MCF 10A (cell line): ENCODE measurements at regions of chr4 and their contacts with region 1.

Region 1: GRCh38 chr4:161564230-161564834 is 599.5 kb downstream of the FSTL5 start:
- DNase-seq: peak; percentile 17
- H3K4me3 Mint-ChIP-seq: no peak overlapping the region
- H3K27ac Mint-ChIP-seq: no peak overlapping the region
- H3K4me1 Mint-ChIP-seq: peaks cover 6% of the 10 kb centered on the region
- H3K27me3 Mint-ChIP-seq: no peaks in the 10 kb centered on the region
- CTCF ChIP-seq: peak; percentile 38

Region 2: DNA sequence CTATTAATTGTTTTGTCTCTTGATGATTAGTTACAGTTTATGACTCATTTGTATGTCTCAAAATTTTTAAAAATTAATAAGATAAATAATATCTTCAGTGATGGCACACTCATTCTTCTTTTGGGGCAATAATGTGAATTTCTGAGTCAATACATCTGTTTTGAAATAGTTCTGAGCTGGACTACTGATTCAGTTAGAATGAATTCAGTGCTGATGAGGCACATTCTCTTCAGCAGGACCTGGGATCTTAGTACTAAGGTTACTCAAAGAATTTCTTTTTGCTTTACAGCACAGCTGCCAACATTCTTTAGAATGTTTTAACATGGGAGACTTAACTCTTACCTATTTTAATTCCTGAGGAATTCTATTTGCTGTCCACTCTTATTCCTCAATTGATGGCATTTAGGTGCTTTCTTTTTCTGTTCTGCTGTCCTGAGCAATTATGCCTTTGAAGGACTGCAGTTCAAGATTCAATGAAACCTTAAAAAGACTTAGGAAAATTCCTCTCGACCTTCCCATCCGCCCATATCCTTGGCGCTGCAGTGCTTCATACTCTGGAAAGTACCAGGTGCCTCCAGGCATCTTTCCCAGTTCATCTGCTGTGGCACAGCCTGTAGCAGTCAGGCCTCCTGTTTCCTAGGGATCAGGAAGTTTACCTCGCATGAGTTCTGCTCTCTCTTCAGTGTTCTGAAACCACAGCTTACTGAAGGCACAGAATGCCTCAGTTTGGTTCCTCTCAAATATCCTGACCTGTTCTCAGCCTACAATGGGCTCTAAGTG is 385.8 kb after region 1 on chr4:
- CTCF ChIA-PET with region 1: no interaction called
- POLR2A ChIA-PET with region 1: no interaction called
- intact Hi-C with region 1: loop called (anchors 2 kb)
- DNase-seq: peak; percentile 10
- H3K4me3 Mint-ChIP-seq: peak overlapping the region; percentile 59
- H3K27ac Mint-ChIP-seq: peak overlapping the region; percentile 88
- H3K4me1 Mint-ChIP-seq: peaks cover 9% of the 10 kb centered on the region
- H3K27me3 Mint-ChIP-seq: no peaks in the 10 kb centered on the region
- CTCF ChIP-seq: no peak